IMR-90 (cell line): ENCODE measurements at regions of chr6 and their contacts with region 1.

Region 1: DNA sequence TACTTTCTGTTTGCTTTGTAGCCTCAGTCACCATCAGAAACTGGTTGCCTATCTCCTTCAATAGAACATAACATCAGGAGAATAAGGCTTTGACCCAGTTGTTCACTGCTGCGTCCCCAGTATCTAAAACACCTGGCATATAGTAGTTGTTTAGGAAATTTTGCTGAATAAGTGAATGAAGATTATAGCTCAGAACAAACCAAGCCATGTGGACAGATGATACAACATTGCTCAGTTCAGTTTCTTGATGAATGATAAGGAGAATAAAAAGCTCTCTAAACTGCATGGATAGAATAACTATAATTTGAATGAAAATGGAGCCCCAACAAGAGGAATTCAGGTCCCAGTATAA is 5.2 kb upstream of the SERPINB1 start:
- DNase-seq: no peak
- ATAC-seq: no peak
- H3K4me3 ChIP-seq: peak overlapping the region; percentile 34; the same call in 1 of the 2 replicates
- H3K27ac ChIP-seq: peak overlapping the region; percentile 81
- H3K4me1 ChIP-seq: peaks cover 18% of the 10 kb centered on the region
- H3K27me3 ChIP-seq: no peaks in the 10 kb centered on the region
- CTCF ChIP-seq: no peak
- POLR2A ChIP-seq: no peak
- RAD21 ChIP-seq: no peak

Region 2: DNA sequence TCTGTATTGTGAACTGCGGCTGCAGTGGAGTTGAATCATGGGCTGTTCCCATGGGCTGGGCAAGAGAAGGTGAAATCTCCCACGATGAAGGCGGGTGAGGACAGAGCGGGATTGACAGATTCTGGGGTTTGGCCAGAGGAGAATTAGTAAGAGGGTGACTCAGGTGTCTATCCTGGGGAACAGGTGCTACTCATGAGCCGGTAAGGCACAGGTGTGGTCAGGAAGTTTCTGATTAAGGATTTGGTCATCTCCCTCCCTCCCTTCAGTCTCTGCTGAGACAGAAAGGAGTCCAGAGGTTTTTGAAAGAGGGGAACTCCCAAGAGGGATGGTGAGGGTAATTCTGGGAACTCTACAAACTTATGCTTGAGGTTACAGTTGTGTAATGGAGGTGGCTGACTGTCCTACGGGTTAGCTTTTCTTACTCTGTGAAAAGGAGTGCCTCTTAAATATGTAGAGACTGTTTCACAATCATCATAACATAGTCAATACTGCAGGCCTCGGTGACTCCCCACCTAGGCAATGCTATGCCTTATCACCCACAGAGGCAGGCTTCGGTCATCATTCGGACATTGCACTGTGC is 36.7 kb before region 1 on chr6:
- CTCF ChIA-PET with region 1: no interaction called
- POLR2A ChIA-PET with region 1: no interaction called
- dilution Hi-C with region 1: no loop called
- in situ Hi-C with region 1: no loop called
- intact Hi-C with region 1: no loop called
- DNase-seq: peak; percentile 17
- ATAC-seq: no peak
- H3K4me3 ChIP-seq: no peak overlapping the region
- H3K27ac ChIP-seq: no peak overlapping the region
- H3K4me1 ChIP-seq: peaks cover 2% of the 10 kb centered on the region; the same call in 1 of the 2 replicates
- H3K27me3 ChIP-seq: no peaks in the 10 kb centered on the region
- CTCF ChIP-seq: no peak
- POLR2A ChIP-seq: no peak
- RAD21 ChIP-seq: no peak

Region 3: GRCh38 chr6:2885967-2886735 is 39.3 kb after region 1 on chr6:
- CTCF ChIA-PET with region 1: no interaction called
- POLR2A ChIA-PET with region 1: no interaction called
- dilution Hi-C with region 1: no loop called
- in situ Hi-C with region 1: no loop called
- intact Hi-C with region 1: no loop called
- DNase-seq: no peak
- ATAC-seq: no peak
- H3K4me3 ChIP-seq: no peak overlapping the region
- H3K27ac ChIP-seq: no peak overlapping the region
- H3K4me1 ChIP-seq: no peaks in the 10 kb centered on the region
- H3K27me3 ChIP-seq: no peaks in the 10 kb centered on the region
- CTCF ChIP-seq: no peak
- POLR2A ChIP-seq: no peak
- RAD21 ChIP-seq: no peak

Region 4: DNA sequence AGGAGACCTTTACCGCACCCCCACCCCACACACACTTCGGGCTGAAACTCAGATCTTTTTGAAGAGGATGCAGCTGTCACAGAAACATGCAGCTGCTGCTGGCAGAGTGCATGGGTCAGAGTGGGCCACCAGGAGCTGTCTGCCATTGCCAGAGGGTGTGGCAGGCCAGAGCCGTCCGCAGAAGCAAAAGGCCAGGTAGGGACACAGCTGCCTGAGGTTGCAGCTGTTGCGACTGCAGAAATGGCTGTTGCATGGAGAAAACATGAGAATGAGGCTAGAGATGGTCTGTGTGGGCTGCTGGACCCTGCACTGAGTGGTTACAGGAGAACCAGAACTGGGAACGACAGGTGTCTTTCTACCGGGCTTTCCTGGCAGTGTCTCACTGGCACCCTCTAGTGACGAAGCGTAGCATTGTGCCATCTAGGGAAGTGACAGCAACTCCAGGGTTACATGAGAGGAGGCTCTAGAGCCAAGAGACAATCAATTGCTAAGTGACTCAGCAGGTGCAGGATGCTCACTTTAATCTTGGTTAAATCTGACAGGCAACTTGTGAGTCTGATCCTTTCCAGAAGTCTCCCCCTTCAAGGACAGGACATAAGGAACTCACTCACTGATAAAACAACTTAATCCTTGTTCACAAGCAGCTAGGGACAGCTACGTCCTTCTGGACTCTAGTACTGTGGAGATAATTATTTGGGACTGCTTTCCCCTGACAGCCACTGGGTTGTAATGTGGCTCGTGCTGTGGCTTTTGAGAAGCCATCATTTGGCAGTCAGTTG is 85.3 kb after region 1 on chr6:
- CTCF ChIA-PET with region 1: interaction called, 24 read pairs
- POLR2A ChIA-PET with region 1: no interaction called
- dilution Hi-C with region 1: no loop called
- in situ Hi-C with region 1: loop called (anchors 5 kb)
- intact Hi-C with region 1: loop called (anchors 1 kb)
- DNase-seq: peak; percentile 68
- ATAC-seq: peak; percentile 97
- H3K4me3 ChIP-seq: no peak overlapping the region
- H3K27ac ChIP-seq: no peak overlapping the region
- H3K4me1 ChIP-seq: no peaks in the 10 kb centered on the region
- H3K27me3 ChIP-seq: no peaks in the 10 kb centered on the region
- CTCF ChIP-seq: peak; percentile 90
- POLR2A ChIP-seq: no peak
- RAD21 ChIP-seq: peak; percentile 91

Region 5: DNA sequence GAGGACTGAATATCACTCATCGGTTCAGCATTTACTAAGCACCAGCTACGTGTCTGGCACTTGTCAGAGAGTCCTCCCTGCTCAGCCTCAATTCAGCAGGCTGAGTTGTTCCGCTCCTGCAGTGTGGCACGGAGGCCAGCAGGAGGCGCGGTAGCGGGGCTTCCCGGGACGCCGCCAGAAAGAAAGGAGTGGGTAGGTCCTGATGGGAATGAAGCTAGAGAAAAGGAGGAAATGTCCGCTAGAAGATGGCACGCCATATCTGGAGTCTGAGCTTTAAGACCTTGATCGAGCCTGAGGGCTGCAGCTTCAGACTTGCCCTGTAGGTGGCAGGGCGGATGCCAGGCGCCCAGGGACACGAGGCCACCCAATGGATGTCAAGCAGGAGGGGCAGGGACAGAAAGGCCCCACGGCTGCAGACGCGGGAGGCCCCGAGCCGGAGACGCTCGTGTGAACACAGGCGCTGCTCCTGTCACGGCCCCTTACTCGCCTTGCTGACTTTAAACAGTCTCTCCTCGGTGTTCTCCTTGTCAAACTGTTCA is 105.8 kb after region 1 on chr6:
- CTCF ChIA-PET with region 1: interaction called, 5 read pairs
- POLR2A ChIA-PET with region 1: no interaction called
- dilution Hi-C with region 1: no loop called
- in situ Hi-C with region 1: no loop called
- intact Hi-C with region 1: loop called (anchors 1 kb)
- DNase-seq: peak; percentile 91
- ATAC-seq: peak; percentile 99
- H3K4me3 ChIP-seq: no peak overlapping the region
- H3K27ac ChIP-seq: peak overlapping the region; percentile 25
- H3K4me1 ChIP-seq: peaks cover 3% of the 10 kb centered on the region; the same call in 1 of the 2 replicates
- H3K27me3 ChIP-seq: no peaks in the 10 kb centered on the region
- CTCF ChIP-seq: peak; percentile 94
- POLR2A ChIP-seq: no peak
- RAD21 ChIP-seq: peak; percentile 80

Region 6: GRCh38 chr6:3052481-3053230 is 205.8 kb after region 1 on chr6:
- CTCF ChIA-PET with region 1: no interaction called
- POLR2A ChIA-PET with region 1: no interaction called
- dilution Hi-C with region 1: no loop called
- in situ Hi-C with region 1: loop called (anchors 10 kb)
- intact Hi-C with region 1: loop called (anchors 2 kb)
- DNase-seq: no peak
- ATAC-seq: no peak
- H3K4me3 ChIP-seq: no peak overlapping the region
- H3K27ac ChIP-seq: no peak overlapping the region
- H3K4me1 ChIP-seq: no peaks in the 10 kb centered on the region
- H3K27me3 ChIP-seq: peaks cover 14% of the 10 kb centered on the region; the same call in 1 of the 2 replicates
- CTCF ChIP-seq: no peak
- POLR2A ChIP-seq: no peak
- RAD21 ChIP-seq: no peak